Activated T-helper 1 cell treated with anti-CD3 and anti-CD28 coated beads, Interleukin-12 subunit alpha, Interleukin-12 subunit beta, Interleukin-2, Interleukin-4 antibody, amounts not matched to agents 30 ng/mL and 10 ng/mL and 1 ng/mL, durations not matched to agents 14 hours and 24 hours and 36 hours (primary cell): ENCODE measurements at regions of chr1 and their contacts with region 1.

Region 1: GRCh38 chr1:92485381-92486257 is 1.1 kb downstream of the GFI1 start:
- DNase-seq: peak; percentile 81
- H3K4me3 Mint-ChIP-seq: peak overlapping the region; percentile 99
- H3K27ac Mint-ChIP-seq: peak overlapping the region; percentile 98
- H3K4me1 Mint-ChIP-seq: peaks cover 41% of the 10 kb centered on the region
- H3K27me3 Mint-ChIP-seq: peaks cover 3% of the 10 kb centered on the region

Region 2: GRCh38 chr1:91021686-91022517 is 1463.7 kb before region 1 on chr1 and contains the start of gene ZNF644:
- intact Hi-C with region 1: loop called (anchors 10 kb)
- DNase-seq: peak; percentile 87
- H3K4me3 Mint-ChIP-seq: peak within 1 kb of the TSS; percentile 92
- H3K27ac Mint-ChIP-seq: peak within 1 kb of the TSS; percentile 99
- H3K4me1 Mint-ChIP-seq: peaks cover 48% of the 10 kb centered on the region
- H3K27me3 Mint-ChIP-seq: peaks cover 2% of the 10 kb centered on the region
- total RNA-seq, gene ZNF644: 60.4 and 68.7 TPM in 2 replicates

Region 3: DNA sequence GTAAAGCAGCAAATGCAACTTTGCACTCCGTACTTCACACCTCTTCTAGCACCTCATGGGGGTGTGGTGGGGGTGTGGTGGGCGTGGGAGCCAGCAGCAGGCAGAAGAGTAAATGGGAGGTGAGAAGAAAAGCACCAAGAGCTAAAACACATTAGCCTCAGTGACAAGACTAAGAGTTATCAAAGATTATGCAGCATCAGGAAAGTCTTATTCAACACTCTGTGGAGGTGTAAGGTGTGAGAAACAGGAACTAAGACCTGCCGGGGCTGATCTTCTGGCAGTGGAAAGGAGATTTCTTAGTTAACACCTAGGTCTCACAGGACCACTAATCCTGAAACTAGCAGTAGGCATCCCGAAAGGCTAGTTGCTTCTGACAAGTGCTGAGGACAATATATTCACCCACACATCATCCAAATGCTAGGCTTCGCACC is 609.6 kb before region 1 on chr1:
- intact Hi-C with region 1: loop called (anchors 10 kb)
- DNase-seq: no peak
- H3K4me3 Mint-ChIP-seq: peak overlapping the region; percentile 37
- H3K27ac Mint-ChIP-seq: peak overlapping the region; percentile 71
- H3K4me1 Mint-ChIP-seq: peaks cover 72% of the 10 kb centered on the region
- H3K27me3 Mint-ChIP-seq: peaks cover 6% of the 10 kb centered on the region

Region 4: DNA sequence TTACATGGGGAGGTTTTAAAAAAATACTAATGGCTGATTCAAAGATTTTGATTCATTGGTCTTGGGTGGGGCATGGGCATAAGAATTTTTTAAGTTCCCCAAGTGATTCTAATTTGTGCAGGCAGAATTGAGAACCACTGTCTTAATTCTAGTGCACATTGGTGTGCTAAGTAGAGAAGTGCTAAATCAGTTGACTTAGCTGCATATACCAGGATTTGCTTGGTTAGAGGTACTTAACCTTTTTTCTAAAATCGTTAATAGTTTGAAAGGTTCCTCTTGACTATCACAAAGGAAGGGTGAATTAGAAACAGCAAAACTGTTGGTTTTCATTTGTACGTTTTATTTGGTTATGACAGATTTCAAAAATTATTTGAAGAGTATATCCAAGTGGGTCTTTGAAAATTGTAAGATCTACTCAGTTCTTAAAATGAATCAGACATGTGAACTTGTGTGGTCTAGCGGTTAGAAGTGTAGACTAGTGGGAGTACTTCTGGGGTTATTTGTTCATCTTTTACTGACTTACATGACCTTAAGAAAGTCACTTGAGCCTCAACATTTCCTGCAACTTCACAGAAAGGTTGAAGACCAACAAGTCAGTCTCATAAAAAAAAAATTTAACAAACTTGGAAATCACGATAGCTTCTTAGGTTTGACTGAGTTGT is 120.1 kb before region 1 on chr1:
- intact Hi-C with region 1: loop called (anchors 2 kb)
- DNase-seq: peak; percentile 10
- H3K4me3 Mint-ChIP-seq: peak overlapping the region; percentile 3
- H3K27ac Mint-ChIP-seq: peak overlapping the region; percentile 76
- H3K4me1 Mint-ChIP-seq: peaks cover 59% of the 10 kb centered on the region
- H3K27me3 Mint-ChIP-seq: no peaks in the 10 kb centered on the region

Region 5: GRCh38 chr1:92577261-92577895 is 91.8 kb after region 1 on chr1:
- intact Hi-C with region 1: loop called (anchors 2 kb)
- DNase-seq: no peak
- H3K4me3 Mint-ChIP-seq: peak overlapping the region; percentile 89
- H3K27ac Mint-ChIP-seq: peak overlapping the region; percentile 75
- H3K4me1 Mint-ChIP-seq: peaks cover 81% of the 10 kb centered on the region
- H3K27me3 Mint-ChIP-seq: no peaks in the 10 kb centered on the region

Region 6: GRCh38 chr1:92728697-92729096 is 243.1 kb after region 1 on chr1:
- intact Hi-C with region 1: no loop called
- DNase-seq: no peak
- H3K4me3 Mint-ChIP-seq: no peak overlapping the region
- H3K27ac Mint-ChIP-seq: no peak overlapping the region
- H3K4me1 Mint-ChIP-seq: no peaks in the 10 kb centered on the region
- H3K27me3 Mint-ChIP-seq: peaks cover 9% of the 10 kb centered on the region

Region 7: GRCh38 chr1:92831762-92832536 is 346.3 kb after region 1 on chr1 and contains the start of gene RPL5:
- intact Hi-C with region 1: loop called (anchors 5 kb)
- DNase-seq: peak; percentile 96
- H3K4me3 Mint-ChIP-seq: peak within 1 kb of the TSS; percentile 96
- H3K27ac Mint-ChIP-seq: peak within 1 kb of the TSS; percentile 97
- H3K4me1 Mint-ChIP-seq: peaks cover 35% of the 10 kb centered on the region
- H3K27me3 Mint-ChIP-seq: peaks cover 2% of the 10 kb centered on the region
- total RNA-seq, gene RPL5: 1,115 and 1,120 TPM in 2 replicates

Region 8: GRCh38 chr1:93179886-93180722 is 694.5 kb after region 1 on chr1 and contains the start of gene TMED5:
- intact Hi-C with region 1: loop called (anchors 10 kb)
- DNase-seq: peak; percentile 98
- H3K4me3 Mint-ChIP-seq: peak within 1 kb of the TSS; percentile 93
- H3K27ac Mint-ChIP-seq: peak within 1 kb of the TSS; percentile 96
- H3K4me1 Mint-ChIP-seq: peaks cover 57% of the 10 kb centered on the region
- H3K27me3 Mint-ChIP-seq: no peaks in the 10 kb centered on the region
- total RNA-seq, gene TMED5: 46.7 and 48.7 TPM in 2 replicates

Region 9: DNA sequence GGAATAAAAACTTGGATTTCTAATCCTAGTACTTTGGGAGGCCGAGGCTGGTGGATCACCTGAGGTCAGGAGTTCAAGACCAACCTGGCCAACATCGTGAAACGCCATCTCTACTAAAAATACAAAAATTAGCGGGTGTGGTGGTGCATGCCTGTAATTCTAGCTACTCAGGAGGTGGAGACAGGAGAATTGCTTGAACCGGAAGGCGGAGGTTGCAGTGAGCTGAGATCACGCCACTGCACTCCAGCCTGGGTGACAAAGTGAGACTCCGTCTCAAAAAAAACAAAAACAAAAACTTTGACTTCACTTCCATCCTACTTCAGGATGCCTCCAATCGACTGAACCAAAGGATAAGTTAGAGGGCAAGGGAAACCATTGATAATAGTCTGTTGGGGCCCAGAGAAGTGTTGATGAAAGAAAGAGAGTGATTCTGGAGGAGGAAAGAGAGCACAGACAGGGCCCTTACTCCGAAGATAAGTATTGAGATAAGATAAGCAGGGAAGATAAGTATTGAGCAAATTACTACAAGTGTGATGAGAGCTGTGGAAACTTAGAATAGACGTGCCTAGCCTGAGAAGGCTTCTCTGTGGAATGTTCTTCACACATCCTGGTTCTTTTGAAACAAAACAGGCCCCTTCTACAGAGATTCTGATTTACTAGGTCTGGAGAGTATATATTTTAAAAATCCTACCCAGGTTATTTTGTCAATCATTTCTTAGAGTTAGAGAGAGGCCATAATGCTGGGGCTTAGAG is 988.5 kb after region 1 on chr1:
- intact Hi-C with region 1: no loop called
- DNase-seq: no peak
- H3K4me3 Mint-ChIP-seq: no peak overlapping the region
- H3K27ac Mint-ChIP-seq: no peak overlapping the region
- H3K4me1 Mint-ChIP-seq: no peaks in the 10 kb centered on the region
- H3K27me3 Mint-ChIP-seq: no peaks in the 10 kb centered on the region